ENCODE measurements at regions of chr18 and their contacts with region 1.

Region 1: GRCh38 chr18:50819728-50820378 is at the start of gene MRO:
- DNase-seq: peak; percentile 77 to 90
- ATAC-seq: peak; percentile 91 to 98 (median 95)
- H3K4me3 ChIP-seq: peak within 1 kb of the TSS; percentile 65
- H3K27ac ChIP-seq: peak within 1 kb of the TSS; percentile 5
- H3K4me1 ChIP-seq: peaks cover 17% of the 10 kb centered on the region
- H3K27me3 ChIP-seq: no peaks in the 10 kb centered on the region
- CTCF ChIP-seq: peak; percentile 90
- total RNA-seq, gene MRO: 0.11 to 1.7 (median 1.6) TPM

Region 2: DNA sequence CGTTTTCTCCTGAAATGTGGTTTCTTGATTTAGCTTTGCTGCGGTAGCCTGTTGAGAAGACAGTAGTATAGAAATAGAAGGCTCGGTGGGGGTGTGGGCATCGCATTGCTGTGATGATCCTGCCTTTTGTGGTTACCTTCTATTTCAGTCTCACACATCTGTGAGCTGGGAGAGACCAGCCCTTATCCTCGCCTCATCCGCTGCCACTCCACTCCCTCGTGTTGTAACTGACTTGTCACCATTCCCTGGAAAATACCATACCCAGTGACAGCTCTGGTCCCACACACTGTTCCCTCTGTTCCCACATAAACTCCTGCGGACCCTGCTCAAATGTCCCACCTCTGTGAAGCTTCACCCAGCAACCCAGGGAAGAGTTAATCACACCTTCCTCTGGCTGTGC is 145.5 kb before region 1 on chr18:
- intact Hi-C with region 1: no loop called
- DNase-seq: no peak
- ATAC-seq: peak in 3 of 4 donors; percentile 57 to 73 (median 64)
- H3K4me3 ChIP-seq: no peak overlapping the region
- H3K27ac ChIP-seq: no peak overlapping the region
- H3K4me1 ChIP-seq: no peaks in the 10 kb centered on the region
- H3K27me3 ChIP-seq: no peaks in the 10 kb centered on the region
- CTCF ChIP-seq: no peak

Region 3: DNA sequence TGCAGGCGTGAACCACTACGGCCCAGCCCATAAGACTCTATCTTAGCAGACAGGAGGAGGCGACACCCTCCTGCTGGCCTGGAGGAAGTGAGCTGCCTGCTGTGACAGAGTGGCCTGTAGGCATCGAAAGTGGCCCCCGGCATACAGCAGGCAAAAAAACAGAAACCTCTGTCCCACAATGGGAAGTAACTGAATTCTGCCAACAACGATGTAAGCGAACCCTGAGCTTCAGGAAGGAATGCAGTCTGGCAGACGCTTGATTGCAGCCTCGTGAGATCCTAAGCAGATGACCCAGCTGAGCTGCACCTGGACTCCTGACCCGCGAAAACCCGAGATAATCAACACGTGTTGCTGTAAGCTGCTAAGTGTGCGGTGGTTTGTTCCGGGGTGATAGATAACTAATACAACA is 13.6 kb before region 1 on chr18:
- intact Hi-C with region 1: no loop called
- DNase-seq: no peak
- ATAC-seq: peak in 1 of 4 donors; percentile 11
- H3K4me3 ChIP-seq: no peak overlapping the region
- H3K27ac ChIP-seq: no peak overlapping the region
- H3K4me1 ChIP-seq: no peaks in the 10 kb centered on the region
- H3K27me3 ChIP-seq: no peaks in the 10 kb centered on the region
- CTCF ChIP-seq: no peak

Region 4: GRCh38 chr18:50866765-50867164 is 46.9 kb after region 1 on chr18:
- intact Hi-C with region 1: loop called in 1 of 2 experiments (anchors 2 kb)
- DNase-seq: no peak
- ATAC-seq: peak in 3 of 4 donors; percentile 65 to 80 (median 70)
- H3K4me3 ChIP-seq: no peak overlapping the region
- H3K27ac ChIP-seq: no peak overlapping the region
- H3K4me1 ChIP-seq: peaks cover 9% of the 10 kb centered on the region
- H3K27me3 ChIP-seq: no peaks in the 10 kb centered on the region
- CTCF ChIP-seq: no peak

Region 5: GRCh38 chr18:51051105-51051712 is 231.4 kb after region 1 on chr18:
- intact Hi-C with region 1: loop called (anchors 2 to 10 kb)
- DNase-seq: no peak
- ATAC-seq: peak; percentile 51 to 88 (median 82)
- H3K4me3 ChIP-seq: no peak overlapping the region
- H3K27ac ChIP-seq: no peak overlapping the region
- H3K4me1 ChIP-seq: peaks cover 1% of the 10 kb centered on the region
- H3K27me3 ChIP-seq: no peaks in the 10 kb centered on the region
- CTCF ChIP-seq: peak; percentile 80

Measured in psoas muscle (tissue), 8 donors.